HepG2 (cell line): ENCODE measurements at regions of chr17 and their contacts with region 1.

Region 1: GRCh38 chr17:72416054-72416675 is 295.3 kb downstream of the SOX9 start:
- DNase-seq: no peak
- ATAC-seq: no peak
- H3K4me3 ChIP-seq: no peak overlapping the region
- H3K27ac ChIP-seq: peak overlapping the region; percentile 89
- H3K4me1 ChIP-seq: peaks cover 89% of the 10 kb centered on the region
- H3K27me3 ChIP-seq: no peaks in the 10 kb centered on the region
- CTCF ChIP-seq: no peak
- EP300 ChIP-seq: no peak; a peak in 1 of 4 replicates
- POLR2A ChIP-seq: no peak
- RAD21 ChIP-seq: no peak

Region 2: DNA sequence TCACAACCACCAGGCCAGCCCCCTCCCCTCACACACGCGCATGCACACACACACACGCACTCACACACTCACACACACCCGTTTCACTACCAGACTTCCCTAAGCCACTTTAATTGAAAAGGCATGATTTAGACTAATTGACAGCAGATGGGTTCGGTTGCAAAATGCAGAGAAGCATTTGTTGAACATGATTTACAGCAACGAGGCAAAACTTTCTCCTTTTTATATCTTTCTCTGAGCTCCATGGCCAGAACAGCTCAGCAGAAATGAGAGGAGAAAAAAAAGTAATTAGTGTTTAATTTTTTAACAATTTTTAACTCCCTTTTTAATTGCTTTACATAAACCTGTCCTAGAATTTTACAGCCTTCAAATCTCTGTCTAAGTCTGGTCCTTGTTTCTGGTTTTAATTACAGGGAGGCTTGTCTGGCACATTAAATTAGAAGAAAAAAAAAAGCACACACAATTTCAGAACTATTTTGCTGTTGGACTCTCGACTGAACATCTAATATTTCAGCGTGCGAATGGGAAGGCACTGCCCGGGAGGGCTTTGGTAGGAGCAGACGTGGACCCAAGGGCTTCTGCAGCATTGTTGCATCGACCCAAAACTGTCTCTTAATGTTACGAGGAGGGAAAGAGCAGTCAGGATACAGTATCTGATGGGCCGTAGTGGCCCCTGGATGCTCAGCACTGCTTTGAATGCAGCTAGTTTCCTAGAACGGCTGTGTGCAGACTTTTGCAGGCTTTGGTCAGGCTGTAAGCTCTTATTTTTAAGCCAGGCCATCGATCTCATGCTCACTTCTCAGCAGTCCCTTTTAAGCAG is 39.4 kb before region 1 on chr17:
- CTCF ChIA-PET with region 1: no interaction called
- POLR2A ChIA-PET with region 1: no interaction called
- in situ Hi-C with region 1: no loop called
- intact Hi-C with region 1: no loop called
- DNase-seq: no peak
- ATAC-seq: no peak
- H3K4me3 ChIP-seq: no peak overlapping the region
- H3K27ac ChIP-seq: no peak overlapping the region
- H3K4me1 ChIP-seq: no peaks in the 10 kb centered on the region
- H3K27me3 ChIP-seq: no peaks in the 10 kb centered on the region
- CTCF ChIP-seq: no peak
- EP300 ChIP-seq: no peak
- POLR2A ChIP-seq: no peak
- RAD21 ChIP-seq: no peak

Region 3: GRCh38 chr17:72392056-72393010 is 23.8 kb before region 1 on chr17:
- CTCF ChIA-PET with region 1: no interaction called
- POLR2A ChIA-PET with region 1: interaction called, 12 read pairs
- in situ Hi-C with region 1: no loop called
- intact Hi-C with region 1: loop called (anchors 2 kb)
- DNase-seq: no peak
- ATAC-seq: peak; percentile 42
- H3K4me3 ChIP-seq: no peak overlapping the region
- H3K27ac ChIP-seq: no peak overlapping the region
- H3K4me1 ChIP-seq: peaks cover 97% of the 10 kb centered on the region
- H3K27me3 ChIP-seq: no peaks in the 10 kb centered on the region
- CTCF ChIP-seq: no peak
- EP300 ChIP-seq: no peak
- POLR2A ChIP-seq: no peak
- RAD21 ChIP-seq: no peak

Region 4: DNA sequence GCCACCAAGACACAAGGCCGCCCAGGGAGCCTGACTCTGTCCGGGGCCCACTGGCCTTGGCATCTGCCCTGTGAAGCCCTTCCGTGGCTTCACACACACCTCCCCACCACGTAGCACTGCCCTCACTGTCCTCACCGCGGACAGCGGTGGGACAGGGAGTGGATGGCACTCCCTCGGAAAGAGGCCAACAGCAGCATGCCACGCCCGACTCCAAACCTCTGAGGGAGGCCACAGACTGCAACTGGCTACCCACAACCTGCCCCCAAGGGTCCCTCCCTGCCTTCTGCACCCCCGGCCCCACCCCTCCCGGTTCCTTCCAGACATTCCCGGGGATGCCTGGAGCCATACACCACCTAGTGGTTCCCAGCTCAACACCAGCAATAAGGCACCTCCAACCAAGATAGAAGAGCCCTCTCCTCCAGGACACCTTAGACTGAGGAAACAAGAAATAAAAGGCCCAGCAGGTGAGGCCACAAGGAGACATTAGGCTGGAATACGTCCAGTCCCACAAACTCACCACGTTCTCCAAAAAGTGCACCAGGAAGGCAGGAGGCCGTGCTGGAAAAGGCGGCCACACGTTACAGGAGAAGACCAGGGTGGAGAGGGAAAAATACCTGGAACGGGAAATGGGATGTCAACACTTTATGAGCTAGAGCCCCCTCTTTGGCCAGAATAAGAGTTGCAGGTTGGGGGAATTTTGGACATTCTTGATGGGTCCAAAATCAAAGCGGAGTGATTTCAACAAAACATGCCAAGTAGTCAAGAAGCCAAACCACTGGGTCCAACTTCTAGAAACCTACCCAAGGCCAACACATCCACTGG is 14.7 kb after region 1 on chr17:
- CTCF ChIA-PET with region 1: no interaction called
- POLR2A ChIA-PET with region 1: interaction called, 10 read pairs
- in situ Hi-C with region 1: no loop called
- intact Hi-C with region 1: no loop called
- DNase-seq: no peak
- ATAC-seq: peak; percentile 20; the same call in 2 of the 3 replicates
- H3K4me3 ChIP-seq: no peak overlapping the region
- H3K27ac ChIP-seq: no peak overlapping the region
- H3K4me1 ChIP-seq: peaks cover 96% of the 10 kb centered on the region
- H3K27me3 ChIP-seq: no peaks in the 10 kb centered on the region
- CTCF ChIP-seq: peak; percentile 55
- EP300 ChIP-seq: no peak
- POLR2A ChIP-seq: no peak
- RAD21 ChIP-seq: no peak; the same call in 1 of the 2 replicates

Region 5: DNA sequence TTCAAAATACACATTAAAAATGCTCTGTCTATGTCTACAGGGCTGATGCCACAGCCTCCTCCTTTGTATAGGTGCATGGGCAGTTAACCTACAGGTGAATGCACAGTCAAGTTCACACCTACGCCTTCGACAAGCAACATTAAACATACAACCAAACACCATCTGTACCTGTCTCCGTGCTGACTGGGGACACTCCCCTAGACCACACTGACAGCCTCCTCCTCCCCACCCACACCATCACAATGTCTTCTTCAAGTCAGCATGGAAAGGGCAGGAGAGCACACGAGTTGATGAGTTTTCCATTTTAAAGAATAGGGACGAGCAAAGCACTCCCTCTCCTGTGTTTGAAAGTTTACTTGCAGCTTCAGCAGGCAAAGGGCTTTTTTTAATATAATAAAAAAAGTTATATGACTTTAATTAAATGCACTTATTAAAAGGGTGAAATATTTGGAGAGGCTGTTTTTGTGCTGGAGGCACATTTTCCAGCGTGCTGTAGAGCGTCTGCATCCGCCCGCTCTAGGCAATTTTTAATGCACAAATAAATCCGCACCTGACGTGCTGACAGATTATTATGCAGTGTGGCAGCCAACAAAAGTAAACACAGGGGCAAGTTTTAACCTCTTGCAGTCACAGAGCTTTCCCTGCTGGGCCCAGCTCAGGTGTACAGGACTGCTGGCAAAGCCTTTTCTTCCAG is 72.5 kb after region 1 on chr17:
- CTCF ChIA-PET with region 1: no interaction called
- POLR2A ChIA-PET with region 1: no interaction called
- in situ Hi-C with region 1: no loop called
- intact Hi-C with region 1: no loop called
- DNase-seq: no peak
- ATAC-seq: no peak; the same call in 2 of the 3 replicates
- H3K4me3 ChIP-seq: 0 out of 6 replicates have a peak overlapping the region, but pooled peaks of 1 of the 3 experiments have one; percentile 4
- H3K27ac ChIP-seq: no peak overlapping the region
- H3K4me1 ChIP-seq: peaks cover 59% of the 10 kb centered on the region
- H3K27me3 ChIP-seq: no peaks in the 10 kb centered on the region
- CTCF ChIP-seq: no peak
- EP300 ChIP-seq: no peak
- POLR2A ChIP-seq: no peak
- RAD21 ChIP-seq: no peak

Region 6: GRCh38 chr17:72515291-72516065 is 99.3 kb after region 1 on chr17:
- CTCF ChIA-PET with region 1: no interaction called
- POLR2A ChIA-PET with region 1: interaction called, 7 read pairs
- in situ Hi-C with region 1: no loop called
- intact Hi-C with region 1: loop called (anchors 1 kb)
- DNase-seq: no peak
- ATAC-seq: no peak
- H3K4me3 ChIP-seq: no peak overlapping the region
- H3K27ac ChIP-seq: no peak overlapping the region
- H3K4me1 ChIP-seq: peaks cover 87% of the 10 kb centered on the region
- H3K27me3 ChIP-seq: no peaks in the 10 kb centered on the region
- CTCF ChIP-seq: no peak
- EP300 ChIP-seq: no peak
- POLR2A ChIP-seq: no peak
- RAD21 ChIP-seq: no peak